PC-3 (cell line): ENCODE measurements at regions of chr11 and their contacts with region 1.

Region 1: DNA sequence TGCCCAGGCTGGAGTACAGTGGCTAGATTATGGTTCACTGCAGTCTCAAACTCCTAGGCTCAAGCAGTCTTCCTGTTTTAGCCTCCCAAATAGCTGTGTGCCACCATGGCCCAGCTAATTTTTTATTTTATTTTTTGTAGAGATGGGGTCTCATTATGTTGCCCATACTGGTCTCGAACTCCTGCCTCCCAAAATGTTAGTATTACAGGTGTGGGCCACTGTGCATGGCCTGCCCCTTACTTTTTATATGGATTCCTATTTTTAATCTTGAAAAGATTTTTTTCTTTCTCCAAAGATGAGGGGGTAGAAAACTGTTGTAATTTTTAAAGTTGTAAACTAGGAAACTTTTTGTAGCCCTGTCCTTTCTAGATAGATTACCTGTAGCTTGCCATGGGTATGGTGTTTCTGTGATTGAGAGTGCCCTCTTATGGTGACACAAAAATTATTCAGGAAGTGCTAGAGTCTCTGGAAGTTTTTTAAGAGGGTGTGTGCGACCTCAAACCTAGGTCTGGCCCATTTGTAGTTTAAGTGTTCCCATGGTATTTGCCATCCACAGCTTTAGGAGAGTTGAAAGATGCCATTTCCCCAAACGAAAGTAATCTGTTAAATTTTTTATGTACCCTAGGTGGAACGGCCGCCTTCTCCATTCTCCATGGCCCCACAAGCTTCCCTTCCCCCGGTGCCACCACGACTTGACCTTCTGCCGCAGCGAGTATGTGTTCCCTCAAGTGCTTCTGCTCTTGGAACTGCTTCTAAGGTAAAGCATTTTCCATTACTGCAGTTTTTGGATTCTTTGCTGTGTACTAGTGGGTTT is 32.4 kb downstream of the MCAM start:
- DNase-seq: peak; percentile 73
- ATAC-seq: peak; percentile 89
- H3K4me3 ChIP-seq: no peak overlapping the region
- H3K27ac ChIP-seq: no peak overlapping the region
- H3K4me1 ChIP-seq: no peaks in the 10 kb centered on the region
- H3K27me3 ChIP-seq: no peaks in the 10 kb centered on the region
- CTCF ChIP-seq: peak; percentile 83

Region 2: DNA sequence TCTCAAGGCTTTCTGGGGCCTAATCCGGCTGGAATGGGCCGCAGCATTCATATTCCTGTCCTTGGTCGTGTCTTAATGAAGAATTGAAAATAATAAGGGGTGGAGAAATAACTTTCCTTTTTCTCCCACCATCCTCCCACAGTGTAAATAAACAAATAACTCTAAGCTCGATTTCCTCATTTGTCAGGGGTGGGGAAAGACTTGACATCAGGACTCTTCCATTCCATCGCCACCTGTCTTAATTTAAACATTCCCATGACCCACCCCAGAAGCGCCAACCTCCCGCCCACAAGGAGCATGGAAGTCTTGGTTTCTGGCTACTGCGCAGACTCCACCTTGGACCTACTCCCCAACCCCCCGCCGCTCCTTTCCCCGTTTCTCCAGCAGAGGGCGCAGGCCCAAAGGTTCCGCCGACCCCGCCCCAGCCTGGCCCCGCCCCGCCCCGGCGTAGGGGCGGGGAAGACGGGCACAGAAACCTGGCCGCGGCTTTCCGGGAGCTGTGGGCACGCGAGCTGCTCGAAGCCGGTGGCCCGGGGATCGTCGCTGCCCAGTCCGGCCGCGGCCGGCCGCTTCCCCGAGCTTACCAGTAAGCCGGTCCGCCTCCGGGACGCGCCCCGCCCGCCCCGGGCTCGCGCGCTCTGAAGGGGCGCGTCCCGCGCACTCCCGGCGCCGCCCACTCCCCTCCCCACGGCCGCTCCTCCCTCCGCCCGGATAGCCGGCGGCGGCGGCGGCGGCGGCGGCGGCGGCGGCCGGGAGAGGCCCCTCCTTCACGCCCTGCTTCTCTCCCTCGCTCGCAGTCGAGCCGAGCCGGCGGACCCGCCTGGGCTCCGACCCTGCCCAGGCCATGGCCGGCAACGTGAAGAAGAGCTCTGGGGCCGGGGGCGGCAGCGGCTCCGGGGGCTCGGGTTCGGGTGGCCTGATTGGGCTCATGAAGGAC is 78.7 kb before region 1 on chr11 and contains the start of gene CBL:
- CTCF ChIA-PET with region 1: interaction called, 5 read pairs
- POLR2A ChIA-PET with region 1: no interaction called
- intact Hi-C with region 1: loop called (anchors 1 kb)
- DNase-seq: peak; percentile 96
- ATAC-seq: peak; percentile 86
- H3K4me3 ChIP-seq: peak within 1 kb of the TSS; percentile 99
- H3K27ac ChIP-seq: peak within 1 kb of the TSS; percentile 58
- H3K4me1 ChIP-seq: peaks cover 18% of the 10 kb centered on the region
- H3K27me3 ChIP-seq: no peaks in the 10 kb centered on the region
- CTCF ChIP-seq: peak; percentile 88
- total RNA-seq, gene CBL: 11.4 and 15.3 TPM in 2 replicates

Region 3: GRCh38 chr11:119964136-119965025 is 679.8 kb after region 1 on chr11:
- CTCF ChIA-PET with region 1: no interaction called
- POLR2A ChIA-PET with region 1: no interaction called
- intact Hi-C with region 1: no loop called
- DNase-seq: no peak
- ATAC-seq: no peak
- H3K4me3 ChIP-seq: no peak overlapping the region
- H3K27ac ChIP-seq: no peak overlapping the region
- H3K4me1 ChIP-seq: no peaks in the 10 kb centered on the region
- H3K27me3 ChIP-seq: peaks cover 72% of the 10 kb centered on the region
- CTCF ChIP-seq: no peak